ENCODE measurements at regions of chr14 and their contacts with region 1.

Region 1: GRCh38 chr14:70809543-70810244 is 381 bp upstream of the MAP3K9 start:
- DNase-seq: peak; percentile 84 to 93 (median 91)
- ATAC-seq: peak; percentile 98
- H3K4me3 ChIP-seq: peak overlapping the region; percentile 38 to 94 (median 74)
- H3K27ac ChIP-seq: peak overlapping the region in 6 of 12 donors; percentile 24 to 75 (median 51)
- H3K4me1 ChIP-seq: peaks cover 0 to 22% (median 6%) of the 10 kb centered on the region in 12 donors
- H3K27me3 ChIP-seq: peaks cover 0 to 34% (median 20%) of the 10 kb centered on the region in 9 donors
- CTCF ChIP-seq: no peak
- POLR2A ChIP-seq: peak in 1 of 2 donors; percentile 14

Region 2: DNA sequence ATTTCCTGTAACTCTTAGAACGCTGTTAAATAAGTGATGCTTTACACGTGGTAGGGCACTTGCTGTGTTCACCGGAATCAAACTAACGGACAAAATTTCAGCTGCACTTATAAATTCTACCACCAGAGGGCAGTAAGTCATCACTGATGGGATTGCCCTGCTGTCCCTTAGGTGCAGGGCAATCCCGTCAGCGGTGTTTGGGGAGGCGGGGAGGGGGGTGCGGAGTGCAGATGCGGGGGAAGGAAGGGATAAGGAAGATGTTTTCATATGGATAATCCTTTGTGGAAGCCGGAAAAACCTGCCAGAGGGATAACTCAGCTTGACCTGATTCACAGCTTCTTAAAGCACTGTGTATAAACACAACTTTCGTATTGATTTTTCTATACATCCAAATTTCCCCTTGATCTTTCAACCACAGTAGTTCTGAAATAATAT is 990.9 kb before region 1 on chr14:
- intact Hi-C with region 1: loop called in 1 of 10 experiments (anchors 10 kb)
- DNase-seq: peak in 3 of 5 donors; percentile 22 to 45 (median 32)
- ATAC-seq: peak in 3 of 4 donors; percentile 64 to 76 (median 73)
- H3K4me3 ChIP-seq: no peak overlapping the region
- H3K27ac ChIP-seq: no peak overlapping the region
- H3K4me1 ChIP-seq: peaks cover 0 to 4% (median 0%) of the 10 kb centered on the region in 12 donors
- H3K27me3 ChIP-seq: peaks cover 0 to 33% (median 12%) of the 10 kb centered on the region in 9 donors
- CTCF ChIP-seq: peak; percentile 72 to 88 (median 83)
- POLR2A ChIP-seq: no peak

Region 3: DNA sequence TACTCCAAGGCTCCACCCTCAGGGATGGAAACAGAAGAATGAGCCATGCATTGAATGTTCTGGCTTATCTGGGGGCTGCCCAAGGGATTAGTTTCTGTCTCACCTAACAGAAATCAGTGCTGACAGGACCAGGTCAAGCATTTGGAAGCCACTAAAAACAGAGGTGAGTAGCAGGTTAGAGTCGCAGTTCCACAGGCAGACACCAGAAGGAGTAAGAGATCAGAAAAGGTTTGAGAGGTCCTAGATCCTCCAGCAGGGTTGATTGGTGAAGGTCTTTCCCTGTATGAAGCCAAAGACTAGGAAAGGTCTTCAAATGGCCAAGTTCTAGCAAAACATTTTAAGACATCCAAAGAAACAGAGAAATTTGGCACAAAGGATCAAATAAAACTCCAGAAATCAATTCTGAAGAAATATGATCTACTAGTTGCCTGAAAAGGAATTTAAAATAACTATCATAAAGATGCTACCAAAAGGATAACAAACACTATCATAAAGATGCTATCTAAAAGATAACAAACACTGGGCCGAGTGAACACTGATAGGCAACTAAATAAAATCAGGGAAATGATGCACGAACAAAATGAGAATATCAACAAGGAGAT is 187.5 kb before region 1 on chr14:
- intact Hi-C with region 1: loop called in 1 of 10 experiments (anchors 10 kb)
- DNase-seq: no peak
- ATAC-seq: peak in 3 of 4 donors; percentile 47 to 77 (median 56)
- H3K4me3 ChIP-seq: no peak overlapping the region
- H3K27ac ChIP-seq: no peak overlapping the region
- H3K4me1 ChIP-seq: peaks cover 0 to 7% (median 0%) of the 10 kb centered on the region in 12 donors
- H3K27me3 ChIP-seq: no peaks in the 10 kb centered on the region
- CTCF ChIP-seq: peak; percentile 45 to 70 (median 62)
- POLR2A ChIP-seq: no peak

Region 4: DNA sequence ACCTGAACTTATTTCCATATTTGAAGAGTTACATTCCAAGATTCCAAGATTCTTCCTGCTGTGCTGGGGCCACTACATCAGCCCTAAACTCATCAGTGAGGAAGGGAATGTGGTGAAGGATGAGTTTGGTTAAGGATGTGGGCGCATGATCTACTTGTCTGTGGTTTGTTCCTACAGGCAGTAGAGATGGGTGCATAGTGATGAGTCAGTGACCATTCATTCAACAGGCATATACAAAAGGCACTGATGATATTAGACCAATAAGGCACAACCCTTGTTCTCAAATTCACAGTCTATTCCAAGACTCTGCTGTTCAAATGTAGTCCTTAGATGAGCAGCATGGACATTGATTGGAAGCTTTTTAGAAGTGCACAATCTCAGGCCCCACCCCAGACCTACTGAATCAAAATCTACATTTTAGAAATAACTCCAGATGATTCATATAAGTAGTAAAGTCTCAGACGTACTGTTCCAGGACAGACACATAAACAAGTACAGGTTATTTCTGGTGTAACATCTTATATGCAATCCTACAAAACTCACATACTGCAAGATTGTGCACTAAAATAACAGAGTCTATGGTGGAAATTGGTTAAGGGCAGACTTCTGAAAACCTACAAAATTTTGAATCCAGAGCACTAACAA is 47.3 kb after region 1 on chr14:
- intact Hi-C with region 1: no loop called
- DNase-seq: no peak
- ATAC-seq: no peak
- H3K4me3 ChIP-seq: no peak overlapping the region
- H3K27ac ChIP-seq: no peak overlapping the region
- H3K4me1 ChIP-seq: no peaks in the 10 kb centered on the region
- H3K27me3 ChIP-seq: no peaks in the 10 kb centered on the region
- CTCF ChIP-seq: no peak
- POLR2A ChIP-seq: no peak